Naive thymus-derived CD4-positive, alpha-beta T cell (primary cell): ENCODE measurements at regions of chr2 and their contacts with region 1.

Region 1: DNA sequence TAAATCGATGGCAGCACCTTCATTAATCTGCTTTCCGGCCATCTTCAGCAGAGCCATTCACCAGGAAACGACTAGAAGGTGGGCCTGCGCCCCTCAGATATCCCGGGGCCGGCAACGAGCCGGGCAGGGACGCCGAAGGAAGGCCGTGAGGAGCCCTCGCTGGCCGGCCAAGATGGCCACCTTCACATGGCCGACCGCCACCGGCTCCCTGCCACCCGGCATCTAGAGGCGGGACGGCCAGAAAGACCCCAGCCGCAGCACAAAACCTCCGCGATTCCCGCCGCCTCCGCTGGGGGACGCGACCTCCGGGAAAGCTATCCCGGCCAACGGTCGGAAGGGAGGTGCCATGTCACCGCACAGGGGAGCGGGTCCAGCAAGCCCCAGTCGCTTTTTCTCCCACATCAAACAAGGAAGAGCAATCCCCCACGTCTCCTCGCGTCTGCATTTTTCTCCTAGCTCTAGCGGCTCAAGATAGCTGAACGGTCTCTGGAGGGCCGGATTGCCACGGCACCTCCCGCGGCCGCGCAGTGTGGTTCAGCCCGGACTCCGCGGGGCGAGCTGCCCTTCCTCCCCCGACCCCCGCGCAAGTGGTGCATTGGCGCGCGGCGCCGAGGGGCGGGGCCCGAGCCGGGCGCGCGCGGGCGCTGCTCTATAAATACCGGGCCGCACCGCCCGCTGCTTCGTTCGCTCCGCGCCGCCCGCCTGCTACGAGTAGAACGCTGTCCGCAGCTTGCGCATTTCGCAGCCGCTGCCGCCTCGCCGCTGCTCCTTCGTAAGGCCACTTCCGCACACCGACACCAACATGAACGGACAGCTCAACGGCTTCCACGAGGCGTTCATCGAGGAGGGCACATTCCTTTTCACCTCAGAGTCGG is at the start of gene MAT2A:
- DNase-seq: peak; percentile 72 to 96 (median 88)
- ATAC-seq: peak; percentile 87
- H3K4me3 ChIP-seq: peak within 1 kb of the TSS; percentile 92
- H3K4me3 Mint-ChIP-seq: peak within 1 kb of the TSS; percentile 91 to 98 (median 95)
- H3K27ac ChIP-seq: peak within 1 kb of the TSS; percentile 84
- H3K27ac Mint-ChIP-seq: peak within 1 kb of the TSS; percentile 90 to 97 (median 94)
- H3K4me1 ChIP-seq: peaks cover 19 to 27% of the 10 kb centered on the region in 2 donors
- H3K4me1 Mint-ChIP-seq: peaks cover 14 to 58% (median 47%) of the 10 kb centered on the region in 7 donors
- H3K27me3 ChIP-seq: no peaks in the 10 kb centered on the region
- H3K27me3 Mint-ChIP-seq: no peaks in the 10 kb centered on the region
- total RNA-seq, gene MAT2A: 96.3 to 268 (median 178) TPM

Region 2: DNA sequence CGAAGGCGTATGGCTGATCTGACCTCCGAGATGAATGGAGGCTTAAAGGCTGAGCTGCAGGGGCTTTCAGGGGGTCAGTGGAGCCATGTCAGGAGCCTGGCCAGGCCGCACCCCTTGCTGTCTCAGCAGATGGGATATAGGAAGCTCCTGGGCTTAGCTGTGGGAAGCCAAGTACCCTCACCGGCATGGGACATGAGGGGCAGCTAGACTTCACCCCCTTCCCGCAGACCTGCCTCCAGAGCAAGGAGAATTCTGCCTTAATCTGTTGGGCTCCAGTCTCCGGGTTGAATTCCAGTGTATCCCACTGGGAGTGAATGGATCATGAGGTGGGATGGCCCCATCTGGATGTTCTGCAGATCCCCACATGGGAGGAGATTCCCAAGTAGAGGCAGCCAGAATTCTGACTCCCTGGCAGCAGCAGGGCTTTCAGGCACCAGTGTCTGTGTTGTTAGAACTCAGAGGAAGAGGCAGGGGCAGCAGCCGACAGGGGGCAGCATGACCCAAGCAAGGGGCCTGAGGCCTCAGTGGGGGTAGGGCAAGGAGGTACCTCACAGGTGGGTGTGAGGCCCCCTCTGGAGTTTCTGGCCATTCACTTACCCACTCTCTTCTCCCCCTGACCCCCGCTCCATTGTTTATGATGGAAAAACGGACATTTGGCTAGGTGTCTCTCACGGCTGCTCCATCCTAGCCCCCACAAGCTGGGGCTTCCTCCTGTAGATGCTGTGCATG is 147.6 kb before region 1 on chr2:
- CTCF ChIA-PET with region 1: interaction called, 3 read pairs
- POLR2A ChIA-PET with region 1: no interaction called
- intact Hi-C with region 1: loop called in 1 of 2 experiments (anchors 1 kb)
- DNase-seq: peak; percentile 52 to 79 (median 71)
- ATAC-seq: peak; percentile 76
- H3K4me3 ChIP-seq: no peak overlapping the region
- H3K4me3 Mint-ChIP-seq: no peak overlapping the region
- H3K27ac ChIP-seq: no peak overlapping the region
- H3K27ac Mint-ChIP-seq: peak overlapping the region in 5 of 9 donors; percentile 9 to 65 (median 38)
- H3K4me1 ChIP-seq: peaks cover 0 to 11% of the 10 kb centered on the region in 2 donors
- H3K4me1 Mint-ChIP-seq: peaks cover 5 to 27% (median 15%) of the 10 kb centered on the region in 7 donors
- H3K27me3 ChIP-seq: no peaks in the 10 kb centered on the region
- H3K27me3 Mint-ChIP-seq: no peaks in the 10 kb centered on the region

Region 3: DNA sequence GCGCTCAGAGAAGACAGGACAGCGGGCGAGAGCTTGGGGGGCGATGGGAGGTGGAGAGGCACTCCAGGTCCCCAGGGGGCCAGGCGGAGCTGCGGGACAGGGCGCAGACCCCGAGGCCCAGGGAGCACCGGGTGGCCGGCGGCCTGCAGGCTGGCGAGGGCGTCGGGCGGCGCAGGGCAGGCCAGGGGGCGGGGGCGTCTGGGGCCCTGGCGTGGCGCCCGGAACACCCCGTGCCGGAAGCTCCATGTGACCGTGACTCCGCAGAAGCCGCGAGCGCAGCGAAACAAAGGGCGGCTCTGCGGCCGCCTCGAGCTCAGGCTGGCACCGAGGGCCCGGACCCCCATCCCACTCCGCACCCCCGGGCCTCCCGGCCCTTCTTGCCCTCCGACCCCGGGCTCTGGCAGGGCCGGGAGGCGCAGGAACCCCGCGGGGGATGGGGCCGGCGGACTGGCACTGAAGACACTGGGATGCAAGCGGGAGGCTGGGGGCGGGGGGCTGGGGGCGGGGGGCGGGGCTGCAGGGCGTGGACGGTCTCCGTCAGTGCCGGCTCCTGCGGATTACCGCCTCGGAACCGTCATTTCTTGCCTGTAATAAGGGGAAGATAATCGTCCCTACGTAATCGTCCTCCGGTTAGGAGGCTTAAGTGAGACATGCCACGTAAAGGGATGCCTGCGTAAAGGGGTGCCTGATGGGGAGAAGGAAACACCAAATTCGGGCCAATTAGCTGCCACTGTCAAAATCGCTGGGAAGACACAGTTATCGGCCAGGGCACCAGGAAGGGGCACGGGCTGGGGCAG is 101.0 kb before region 1 on chr2:
- CTCF ChIA-PET with region 1: no interaction called
- POLR2A ChIA-PET with region 1: interaction called, 27 read pairs
- intact Hi-C with region 1: loop called (anchors 1 kb)
- DNase-seq: peak; percentile 65 to 78 (median 75)
- ATAC-seq: peak; percentile 87
- H3K4me3 ChIP-seq: peak overlapping the region; percentile 65
- H3K4me3 Mint-ChIP-seq: peak overlapping the region; percentile 86 to 95 (median 91)
- H3K27ac ChIP-seq: peak overlapping the region; percentile 82
- H3K27ac Mint-ChIP-seq: peak overlapping the region; percentile 90 to 96 (median 94)
- H3K4me1 ChIP-seq: peaks cover 12 to 25% of the 10 kb centered on the region in 2 donors
- H3K4me1 Mint-ChIP-seq: peaks cover 15 to 42% (median 34%) of the 10 kb centered on the region in 7 donors
- H3K27me3 ChIP-seq: no peaks in the 10 kb centered on the region
- H3K27me3 Mint-ChIP-seq: no peaks in the 10 kb centered on the region

Region 4: DNA sequence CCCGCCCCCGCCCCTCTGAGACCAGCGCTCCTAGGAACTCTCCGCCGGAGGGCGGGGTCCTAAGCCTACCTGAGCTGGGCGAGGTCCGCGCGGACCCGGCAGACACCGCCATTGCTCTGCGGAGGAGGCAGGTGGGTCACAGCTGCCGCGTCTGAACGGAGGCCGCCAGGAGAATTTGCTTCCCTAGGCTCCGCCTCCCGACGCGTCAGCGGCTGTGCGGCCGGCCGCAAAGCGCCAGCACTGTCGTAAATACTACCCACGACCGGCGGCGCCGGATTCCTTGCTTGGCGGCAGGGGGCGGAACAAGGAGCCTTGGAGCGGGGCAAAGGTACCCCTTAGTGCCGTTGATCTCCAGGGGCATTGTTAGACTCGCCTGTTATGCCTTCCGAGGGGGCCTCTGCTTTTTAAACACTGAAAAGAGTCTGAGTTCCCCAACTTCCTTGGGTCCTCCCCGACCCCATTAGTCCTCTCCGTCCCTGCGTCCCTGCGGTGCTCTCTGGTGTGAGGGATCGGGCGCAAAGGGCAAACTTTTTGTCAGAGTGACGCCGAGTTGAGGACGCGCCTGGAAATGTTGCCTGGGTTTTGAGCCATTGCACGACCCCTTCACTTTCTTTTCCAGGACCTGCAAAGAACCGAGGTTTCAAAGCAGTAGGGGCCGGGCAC is 22.7 kb after region 1 on chr2 and contains the start of gene GGCX:
- CTCF ChIA-PET with region 1: interaction called, 3 read pairs
- POLR2A ChIA-PET with region 1: interaction called, 38 read pairs
- intact Hi-C with region 1: loop called (anchors 1 kb)
- DNase-seq: peak; percentile 77 to 92 (median 88)
- ATAC-seq: peak; percentile 98
- H3K4me3 ChIP-seq: peak within 1 kb of the TSS; percentile 98
- H3K4me3 Mint-ChIP-seq: peak within 1 kb of the TSS; percentile 81 to 99 (median 97)
- H3K27ac ChIP-seq: peak within 1 kb of the TSS; percentile 95
- H3K27ac Mint-ChIP-seq: peak within 1 kb of the TSS; percentile 86 to 99 (median 95)
- H3K4me1 ChIP-seq: peaks cover 6 to 8% of the 10 kb centered on the region in 2 donors
- H3K4me1 Mint-ChIP-seq: peaks cover 17 to 48% (median 32%) of the 10 kb centered on the region in 7 donors
- H3K27me3 ChIP-seq: no peaks in the 10 kb centered on the region
- H3K27me3 Mint-ChIP-seq: no peaks in the 10 kb centered on the region
- total RNA-seq, gene GGCX: 20.4 to 34.2 (median 26.3) TPM

Region 5: GRCh38 chr2:85602476-85603234 is 63.9 kb after region 1 on chr2 and contains the start of gene TMEM150A:
- CTCF ChIA-PET with region 1: no interaction called
- POLR2A ChIA-PET with region 1: interaction called, 12 read pairs
- intact Hi-C with region 1: loop called (anchors 2 kb)
- DNase-seq: peak; percentile 68 to 91 (median 78)
- ATAC-seq: peak; percentile 97
- H3K4me3 ChIP-seq: peak within 1 kb of the TSS; percentile 99
- H3K4me3 Mint-ChIP-seq: peak within 1 kb of the TSS; percentile 89 to 98 (median 91)
- H3K27ac ChIP-seq: peak within 1 kb of the TSS; percentile 81
- H3K27ac Mint-ChIP-seq: peak within 1 kb of the TSS; percentile 42 to 96 (median 82)
- H3K4me1 ChIP-seq: peaks cover 7 to 9% of the 10 kb centered on the region in 2 donors
- H3K4me1 Mint-ChIP-seq: peaks cover 16 to 45% (median 37%) of the 10 kb centered on the region in 7 donors
- H3K27me3 ChIP-seq: no peaks in the 10 kb centered on the region
- H3K27me3 Mint-ChIP-seq: peaks cover 0 to 2% (median 0%) of the 10 kb centered on the region in 5 donors
- total RNA-seq, gene TMEM150A: 5.1 to 17.8 (median 11.2) TPM